H1 (cell line): ENCODE measurements at regions of chr15 and their contacts with region 1.

Region 1: DNA sequence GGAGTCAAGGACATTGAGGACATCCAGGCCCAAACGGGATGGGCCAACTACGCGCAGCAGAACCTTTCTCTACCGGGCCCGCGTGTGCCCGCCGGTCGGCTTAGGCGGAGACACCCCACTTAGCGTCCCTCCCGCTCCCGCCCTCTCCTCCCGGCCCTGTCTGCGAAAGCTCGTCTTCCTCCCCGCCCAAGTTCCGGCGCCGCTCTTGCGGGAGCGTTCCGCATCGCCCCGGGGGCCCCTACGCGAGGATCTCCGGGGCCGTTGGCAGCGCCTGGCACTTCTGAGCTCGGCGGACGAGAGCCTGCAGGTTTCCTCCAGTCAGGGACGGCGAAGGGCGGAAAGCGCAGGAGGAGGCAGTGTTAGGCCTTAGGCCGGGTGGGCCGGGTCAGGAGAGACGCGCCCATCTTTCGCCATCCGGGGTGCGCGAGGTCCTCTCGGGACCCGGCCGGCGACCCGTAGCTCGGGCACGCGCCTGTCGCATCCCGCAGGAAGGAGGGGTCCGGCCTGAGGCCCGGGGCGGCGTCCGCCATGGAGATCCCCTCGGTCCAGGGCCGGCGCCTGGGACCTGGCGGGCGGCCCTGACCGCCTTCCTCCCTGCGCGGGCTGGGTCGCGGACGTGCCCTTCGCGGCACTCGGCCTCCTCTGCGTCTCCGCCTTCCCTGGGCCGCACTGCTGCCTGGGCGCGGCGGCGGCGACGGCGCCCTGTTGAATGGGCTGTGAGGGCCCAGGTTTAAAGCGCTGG is at the start of gene FEM1B:
- DNase-seq: peak; percentile 75 to 92
- H3K4me3 ChIP-seq: peak within 1 kb of the TSS; percentile 78 to 99 (median 89)
- H3K27ac ChIP-seq: peak within 1 kb of the TSS; percentile 94
- H3K4me1 ChIP-seq: peaks cover 5 to 18% (median 14%) of the 10 kb centered on the region in 4 experiments; a peak in 6 of 7 replicates
- H3K27me3 ChIP-seq: no peaks in the 10 kb centered on the region
- CTCF ChIP-seq: peak in 1 of 3 experiments; percentile 8; a peak in 1 of 4 replicates
- EP300 ChIP-seq: peak in 1 of 2 experiments; percentile 68; a peak in 1 of 3 replicates
- POLR2A ChIP-seq: peak; percentile 54 to 88; a peak in 2 of 3 replicates
- RAD21 ChIP-seq: no peak
- total RNA-seq, gene FEM1B: 72.9 and 83.8 TPM in 2 replicates

Region 2: GRCh38 chr15:68229386-68230156 is 48.2 kb before region 1 on chr15 and contains the start of gene CLN6:
- CTCF ChIA-PET with region 1: no interaction called
- POLR2A ChIA-PET with region 1: interaction called, 29 read pairs
- DNase-seq: peak in 1 of 2 experiments; percentile 88
- H3K4me3 ChIP-seq: peak within 1 kb of the TSS; percentile 51 to 92 (median 78)
- H3K27ac ChIP-seq: peak within 1 kb of the TSS; percentile 90
- H3K4me1 ChIP-seq: peaks cover 7 to 17% (median 11%) of the 10 kb centered on the region in 4 experiments
- H3K27me3 ChIP-seq: peaks cover 0 to 2% (median 0%) of the 10 kb centered on the region in 4 experiments; a peak in 1 of 7 replicates
- CTCF ChIP-seq: no peak
- EP300 ChIP-seq: no peak; a peak in 1 of 3 replicates
- POLR2A ChIP-seq: peak; percentile 40 to 53; a peak in 2 of 3 replicates
- RAD21 ChIP-seq: no peak
- total RNA-seq, gene CLN6: 60.0 and 62.3 TPM in 2 replicates

Region 3: GRCh38 chr15:68252925-68253534 is 24.7 kb before region 1 on chr15:
- CTCF ChIA-PET with region 1: interaction called, 72 read pairs
- POLR2A ChIA-PET with region 1: interaction called, 32 read pairs
- DNase-seq: no peak
- H3K4me3 ChIP-seq: no peak overlapping the region
- H3K27ac ChIP-seq: no peak overlapping the region
- H3K4me1 ChIP-seq: peaks cover 0 to 8% (median 6%) of the 10 kb centered on the region in 4 experiments; a peak in 4 of 7 replicates
- H3K27me3 ChIP-seq: no peaks in the 10 kb centered on the region
- CTCF ChIP-seq: peak in 2 of 3 experiments; percentile 72 to 83; a peak in 3 of 4 replicates
- EP300 ChIP-seq: no peak
- POLR2A ChIP-seq: no peak
- RAD21 ChIP-seq: peak; percentile 91 to 93

Region 4: DNA sequence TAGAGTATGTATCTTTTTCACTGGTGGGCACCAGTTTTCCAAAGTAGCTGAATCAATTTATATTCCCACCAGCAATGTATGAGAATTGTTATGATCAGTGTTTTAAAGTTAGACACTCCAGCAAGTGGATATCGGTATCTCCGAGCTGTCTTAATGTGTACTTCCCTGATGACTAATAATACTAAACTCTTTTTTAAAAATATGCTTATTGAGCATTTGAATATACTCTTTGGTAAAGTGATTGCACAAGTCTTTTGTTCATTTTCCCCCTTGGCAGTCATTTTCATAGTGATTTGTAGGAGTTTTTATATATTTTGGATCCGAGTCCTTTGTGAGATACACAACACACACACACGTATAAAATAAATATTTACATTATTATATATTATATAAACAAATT is 12.7 kb before region 1 on chr15:
- CTCF ChIA-PET with region 1: interaction called, 3 read pairs
- POLR2A ChIA-PET with region 1: interaction called, 50 read pairs
- DNase-seq: no peak
- H3K4me3 ChIP-seq: peak overlapping the region in 1 of 4 experiments; percentile 39; a peak in 2 of 8 replicates
- H3K27ac ChIP-seq: no peak overlapping the region
- H3K4me1 ChIP-seq: peaks cover 3 to 22% (median 11%) of the 10 kb centered on the region in 4 experiments; a peak in 3 of 7 replicates
- H3K27me3 ChIP-seq: no peaks in the 10 kb centered on the region
- CTCF ChIP-seq: no peak
- EP300 ChIP-seq: no peak
- POLR2A ChIP-seq: no peak
- RAD21 ChIP-seq: no peak

Region 5: GRCh38 chr15:68292157-68292781 is 14.5 kb after region 1 on chr15:
- CTCF ChIA-PET with region 1: interaction called, 5 read pairs
- POLR2A ChIA-PET with region 1: interaction called, 28 read pairs
- DNase-seq: no peak
- H3K4me3 ChIP-seq: no peak overlapping the region
- H3K27ac ChIP-seq: no peak overlapping the region
- H3K4me1 ChIP-seq: peaks cover 0 to 13% (median 5%) of the 10 kb centered on the region in 4 experiments; a peak in 3 of 7 replicates
- H3K27me3 ChIP-seq: no peaks in the 10 kb centered on the region
- CTCF ChIP-seq: no peak
- EP300 ChIP-seq: no peak
- POLR2A ChIP-seq: no peak
- RAD21 ChIP-seq: no peak

Region 6: GRCh38 chr15:68298882-68299381 is 21.2 kb after region 1 on chr15:
- CTCF ChIA-PET with region 1: no interaction called
- POLR2A ChIA-PET with region 1: interaction called, 37 read pairs
- DNase-seq: no peak
- H3K4me3 ChIP-seq: no peak overlapping the region
- H3K27ac ChIP-seq: no peak overlapping the region
- H3K4me1 ChIP-seq: peaks cover 0 to 5% (median 2%) of the 10 kb centered on the region in 4 experiments; a peak in 4 of 7 replicates
- H3K27me3 ChIP-seq: no peaks in the 10 kb centered on the region
- CTCF ChIP-seq: no peak
- EP300 ChIP-seq: no peak
- POLR2A ChIP-seq: no peak
- RAD21 ChIP-seq: no peak

Region 7: GRCh38 chr15:68328443-68328842 is 50.7 kb after region 1 on chr15:
- CTCF ChIA-PET with region 1: no interaction called
- POLR2A ChIA-PET with region 1: no interaction called
- DNase-seq: no peak
- H3K4me3 ChIP-seq: no peak overlapping the region
- H3K27ac ChIP-seq: no peak overlapping the region
- H3K4me1 ChIP-seq: peaks cover 2 to 18% (median 8%) of the 10 kb centered on the region in 4 experiments
- H3K27me3 ChIP-seq: no peaks in the 10 kb centered on the region
- CTCF ChIP-seq: no peak
- EP300 ChIP-seq: no peak
- POLR2A ChIP-seq: no peak
- RAD21 ChIP-seq: no peak

Region 8: GRCh38 chr15:68706256-68706655 is 428.5 kb after region 1 on chr15:
- CTCF ChIA-PET with region 1: no interaction called
- POLR2A ChIA-PET with region 1: no interaction called
- DNase-seq: no peak
- H3K4me3 ChIP-seq: no peak overlapping the region
- H3K27ac ChIP-seq: no peak overlapping the region
- H3K4me1 ChIP-seq: peaks cover 0 to 2% (median 0%) of the 10 kb centered on the region in 4 experiments; a peak in 2 of 7 replicates
- H3K27me3 ChIP-seq: no peaks in the 10 kb centered on the region
- CTCF ChIP-seq: no peak
- EP300 ChIP-seq: no peak
- POLR2A ChIP-seq: no peak
- RAD21 ChIP-seq: no peak